Esophagus squamous epithelium (tissue), 5 donors: ENCODE measurements at regions of chr7 and their contacts with region 1.

Region 1: DNA sequence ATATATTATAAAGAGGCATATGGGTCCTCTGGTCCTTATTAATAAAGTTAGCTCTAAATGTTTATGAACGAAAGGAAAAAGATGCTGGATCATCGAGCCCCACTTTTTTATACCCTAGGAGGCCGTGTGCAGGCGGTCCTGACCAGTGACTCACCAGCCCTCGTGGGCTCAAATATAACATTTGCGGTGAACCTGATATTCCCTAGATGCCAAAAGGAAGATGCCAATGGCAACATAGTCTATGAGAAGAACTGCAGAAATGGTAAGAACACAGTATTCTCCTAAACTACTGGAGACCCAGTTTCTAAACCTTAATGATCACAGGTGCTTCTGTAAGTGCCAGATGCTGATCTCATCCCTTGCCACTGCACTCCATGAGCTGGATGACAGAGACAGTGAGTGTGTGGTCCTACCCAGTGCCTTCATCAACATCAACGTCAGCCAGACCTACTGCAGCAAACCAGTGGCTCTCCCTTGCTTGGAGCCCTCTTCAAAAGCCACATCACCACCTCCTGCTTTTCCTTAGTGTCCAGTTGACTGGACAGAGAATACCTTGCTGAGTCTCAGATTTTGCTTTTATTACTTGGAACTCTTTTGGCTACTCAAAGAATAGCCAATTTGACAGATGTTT is 7.6 kb downstream of the GPNMB start:
- DNase-seq: no peak
- H3K4me3 ChIP-seq: no peak overlapping the region
- H3K27ac ChIP-seq: no peak overlapping the region
- H3K4me1 ChIP-seq: peaks cover 0 to 2% (median 0%) of the 10 kb centered on the region in 3 donors
- H3K27me3 ChIP-seq: peaks cover 0 to 4% (median 0%) of the 10 kb centered on the region in 4 donors
- CTCF ChIP-seq: no peak
- POLR2A ChIP-seq: no peak

Region 2: DNA sequence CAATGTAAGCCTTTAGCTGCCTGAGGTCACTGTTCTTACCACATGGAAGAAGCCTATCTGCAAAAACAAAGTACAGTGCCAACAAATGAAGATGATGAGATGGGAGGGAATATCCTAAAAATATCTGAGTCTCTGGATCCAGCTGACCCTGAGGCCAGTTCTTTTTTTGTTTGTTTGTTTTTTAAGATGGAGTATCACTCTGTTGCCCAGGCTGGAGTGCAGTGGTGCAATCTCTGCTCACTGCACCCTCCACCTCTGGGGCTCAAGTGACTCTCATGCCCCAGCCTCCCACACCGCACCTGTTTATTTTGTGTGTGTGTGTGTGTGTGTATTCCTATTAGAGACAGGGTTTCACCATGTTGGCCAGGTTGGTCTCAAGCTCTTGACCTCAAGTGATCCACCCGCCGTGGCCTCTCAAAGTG is 285.1 kb before region 1 on chr7:
- intact Hi-C with region 1: no loop called
- DNase-seq: no peak
- H3K4me3 ChIP-seq: no peak overlapping the region
- H3K27ac ChIP-seq: no peak overlapping the region
- H3K4me1 ChIP-seq: no peaks in the 10 kb centered on the region
- H3K27me3 ChIP-seq: no peaks in the 10 kb centered on the region
- CTCF ChIP-seq: no peak
- POLR2A ChIP-seq: no peak

Region 3: GRCh38 chr7:23168111-23168885 is 85.9 kb before region 1 on chr7:
- intact Hi-C with region 1: no loop called
- DNase-seq: no peak
- H3K4me3 ChIP-seq: no peak overlapping the region
- H3K27ac ChIP-seq: no peak overlapping the region
- H3K4me1 ChIP-seq: no peaks in the 10 kb centered on the region
- H3K27me3 ChIP-seq: no peaks in the 10 kb centered on the region
- CTCF ChIP-seq: no peak
- POLR2A ChIP-seq: no peak

Region 4: GRCh38 chr7:23181684-23182553 is 72.2 kb before region 1 on chr7 and contains the start of gene NUP42:
- intact Hi-C with region 1: loop called (anchors 10 kb)
- DNase-seq: peak; percentile 70
- H3K4me3 ChIP-seq: peak within 1 kb of the TSS; percentile 79 to 94 (median 86)
- H3K27ac ChIP-seq: peak within 1 kb of the TSS; percentile 93 to 97 (median 94)
- H3K4me1 ChIP-seq: peaks cover 12 to 54% (median 15%) of the 10 kb centered on the region in 3 donors
- H3K27me3 ChIP-seq: no peaks in the 10 kb centered on the region
- CTCF ChIP-seq: peak in 1 of 6 experiments; percentile 9
- POLR2A ChIP-seq: peak in 3 of 4 donors; percentile 68 to 82 (median 71)
- total RNA-seq, gene NUP42: 15.5 to 34.3 (median 29.1) TPM